Activated CD4-positive, alpha-beta T cell treated with anti-CD3 and anti-CD28 coated beads for 36 hours (primary cell): ENCODE measurements at regions of chr1 and their contacts with region 1.

Region 1: DNA sequence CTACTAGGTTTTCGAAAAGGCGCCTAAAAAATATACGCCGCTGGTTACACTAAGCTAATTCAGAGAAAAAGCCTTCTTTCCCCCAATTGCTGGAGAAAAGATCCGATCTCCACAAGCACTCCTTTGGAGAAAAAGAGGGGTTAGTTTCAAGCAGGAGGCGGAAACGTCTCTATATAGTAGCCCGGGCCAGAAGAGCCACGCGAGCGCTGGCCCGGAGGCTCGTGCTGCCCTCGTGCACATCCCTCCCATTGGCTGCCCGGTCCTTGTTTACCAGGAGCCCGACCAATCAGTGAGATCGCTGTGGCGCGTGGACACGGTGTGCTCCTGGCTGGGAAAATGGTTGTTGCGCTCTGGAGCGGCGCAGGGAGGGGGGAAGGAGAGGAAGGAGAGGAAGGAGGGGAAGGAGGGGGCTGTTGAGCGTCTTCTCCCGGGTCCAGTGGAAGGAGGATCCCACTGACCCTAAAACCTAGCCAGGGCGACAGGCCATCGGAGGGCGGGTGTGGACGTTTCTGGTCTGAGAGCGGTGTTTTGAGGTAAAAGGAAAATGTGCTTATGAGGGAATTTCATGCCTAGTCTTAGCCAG is at the start of gene TXNIP:
- DNase-seq: peak; percentile 97
- ATAC-seq: peak; percentile 82
- H3K4me3 Mint-ChIP-seq: peak within 1 kb of the TSS; percentile 92
- H3K27ac Mint-ChIP-seq: peak within 1 kb of the TSS; percentile 99
- H3K4me1 Mint-ChIP-seq: peaks cover 68% of the 10 kb centered on the region
- H3K27me3 Mint-ChIP-seq: no peaks in the 10 kb centered on the region
- total RNA-seq, gene TXNIP: 112 TPM

Region 2: GRCh38 chr1:145885738-145886287 is 110.7 kb before region 1 on chr1 and contains the start of gene ANKRD35:
- CTCF ChIA-PET with region 1: no interaction called
- POLR2A ChIA-PET with region 1: no interaction called
- intact Hi-C with region 1: loop called in 1 of 2 experiments (anchors 1 kb)
- DNase-seq: peak; percentile 92
- ATAC-seq: peak; percentile 100
- H3K4me3 Mint-ChIP-seq: peak within 1 kb of the TSS; percentile 72
- H3K27ac Mint-ChIP-seq: no peak within 1 kb of the TSS
- H3K4me1 Mint-ChIP-seq: peaks cover 14% of the 10 kb centered on the region
- H3K27me3 Mint-ChIP-seq: peaks cover 17% of the 10 kb centered on the region
- total RNA-seq, gene ANKRD35: 0.30 to 0.55 TPM

Region 3: DNA sequence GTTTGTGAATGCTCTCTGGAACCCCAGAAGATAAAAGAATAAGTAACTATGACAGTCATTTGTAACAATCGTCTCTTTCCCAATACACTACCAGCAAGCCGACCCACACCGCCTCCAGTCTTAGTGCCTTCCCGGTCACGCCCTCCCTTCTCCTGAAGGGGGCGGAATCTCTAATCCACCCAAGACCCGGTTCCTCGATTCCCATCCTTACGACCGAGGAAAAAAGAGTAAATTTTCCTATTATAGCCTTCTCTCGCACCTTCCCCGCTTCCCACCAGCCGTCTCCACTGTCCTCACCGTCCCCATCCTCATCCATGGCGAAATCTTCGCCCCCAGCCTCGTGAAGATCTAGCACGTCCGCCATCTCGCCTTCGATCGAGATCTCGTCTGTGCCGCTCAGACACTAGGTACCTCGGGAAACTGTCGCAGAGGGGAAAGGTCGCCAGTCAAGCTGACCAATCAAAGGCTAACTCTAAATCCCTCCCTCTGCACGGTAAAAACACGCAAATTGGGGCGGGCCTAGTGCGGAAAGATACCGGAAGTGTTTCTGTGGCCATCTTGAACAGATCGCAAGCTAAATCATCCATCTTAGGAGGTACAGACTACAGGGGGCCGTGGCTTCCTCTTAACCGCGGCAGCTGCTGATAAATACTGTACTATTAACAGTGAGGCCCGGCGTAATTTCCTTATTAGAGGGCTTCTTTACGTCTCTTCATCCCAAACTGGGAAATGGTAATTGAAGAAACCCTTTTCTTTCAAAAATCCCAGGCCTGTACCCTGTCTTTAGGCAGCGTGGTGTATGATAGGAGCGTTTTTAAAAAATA is 69.2 kb before region 1 on chr1 and contains the start of gene RBM8A:
- CTCF ChIA-PET with region 1: interaction called, 3 read pairs
- POLR2A ChIA-PET with region 1: interaction called, 10 read pairs
- intact Hi-C with region 1: loop called (anchors 1 to 5 kb)
- DNase-seq: peak; percentile 96
- ATAC-seq: peak; percentile 97
- H3K4me3 Mint-ChIP-seq: no peak within 1 kb of the TSS
- H3K27ac Mint-ChIP-seq: no peak within 1 kb of the TSS
- H3K4me1 Mint-ChIP-seq: peaks cover 28% of the 10 kb centered on the region
- H3K27me3 Mint-ChIP-seq: no peaks in the 10 kb centered on the region
- total RNA-seq, gene RBM8A: 293 to 330 TPM

Region 4: DNA sequence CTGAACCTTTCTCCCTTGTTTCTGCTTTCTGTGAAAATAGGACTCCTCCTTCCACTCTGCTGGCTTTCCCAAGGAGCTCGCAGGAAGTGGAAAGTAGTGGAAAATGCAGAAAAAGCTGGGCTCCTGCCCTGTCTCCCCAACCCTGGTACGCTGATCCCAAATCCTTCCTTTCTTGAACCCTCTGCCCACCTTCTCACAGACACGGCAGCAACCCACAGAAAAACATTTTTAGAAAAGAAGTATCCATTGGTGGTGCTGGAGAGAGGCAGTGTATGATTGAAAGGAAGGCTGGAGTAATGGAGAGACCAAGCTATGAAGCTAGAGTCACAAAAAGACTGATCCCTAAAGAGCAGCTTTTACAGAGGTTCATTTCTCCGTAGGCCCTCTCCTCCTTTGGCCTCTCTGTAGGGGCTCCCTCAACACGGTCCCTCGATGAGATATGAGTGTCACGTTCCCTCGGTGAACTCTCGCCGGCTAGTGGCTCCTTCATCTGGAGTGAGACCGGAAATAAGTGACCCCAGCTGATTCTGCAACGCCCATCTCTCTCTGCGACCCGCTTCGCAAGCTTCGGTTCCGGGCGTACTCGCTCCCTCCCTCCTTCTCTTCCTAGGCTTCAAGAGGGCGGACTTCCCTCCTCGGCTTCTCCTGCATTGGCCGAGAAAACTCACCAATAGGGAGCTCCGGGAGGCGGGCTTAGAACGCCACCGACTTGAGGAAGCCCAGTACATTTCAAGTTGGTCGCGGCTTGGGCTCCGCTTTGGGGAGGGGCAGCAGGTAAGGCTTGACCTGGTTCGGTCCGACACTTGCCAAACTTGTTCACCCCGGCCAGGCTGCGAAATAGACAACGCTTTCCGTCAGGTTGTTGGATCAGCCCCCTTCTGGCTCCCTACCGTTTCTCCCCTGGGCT is 32.3 kb before region 1 on chr1 and contains the starts of genes ANKRD34A and POLR3GL:
- CTCF ChIA-PET with region 1: interaction called, 11 read pairs
- POLR2A ChIA-PET with region 1: interaction called, 8 read pairs
- intact Hi-C with region 1: loop called (anchors 1 kb)
- DNase-seq: peak; percentile 95
- ATAC-seq: peak; percentile 88
- H3K4me3 Mint-ChIP-seq: peak within 1 kb of the TSS; percentile 85
- H3K27ac Mint-ChIP-seq: peak within 1 kb of the TSS; percentile 87
- H3K4me1 Mint-ChIP-seq: peaks cover 33% of the 10 kb centered on the region
- H3K27me3 Mint-ChIP-seq: no peaks in the 10 kb centered on the region
- total RNA-seq, gene ANKRD34A: 5.8 to 6.1 TPM
- total RNA-seq, gene POLR3GL: 19.3 to 22.4 TPM

Region 5: GRCh38 chr1:146007506-146008133 is 11.1 kb after region 1 on chr1:
- CTCF ChIA-PET with region 1: interaction called, 25 read pairs
- POLR2A ChIA-PET with region 1: interaction called, 5 read pairs
- intact Hi-C with region 1: loop called (anchors 1 kb)
- DNase-seq: no peak
- ATAC-seq: no peak
- H3K4me3 Mint-ChIP-seq: peak overlapping the region; percentile 58
- H3K27ac Mint-ChIP-seq: peak overlapping the region; percentile 76
- H3K4me1 Mint-ChIP-seq: peaks cover 38% of the 10 kb centered on the region
- H3K27me3 Mint-ChIP-seq: no peaks in the 10 kb centered on the region

Region 6: DNA sequence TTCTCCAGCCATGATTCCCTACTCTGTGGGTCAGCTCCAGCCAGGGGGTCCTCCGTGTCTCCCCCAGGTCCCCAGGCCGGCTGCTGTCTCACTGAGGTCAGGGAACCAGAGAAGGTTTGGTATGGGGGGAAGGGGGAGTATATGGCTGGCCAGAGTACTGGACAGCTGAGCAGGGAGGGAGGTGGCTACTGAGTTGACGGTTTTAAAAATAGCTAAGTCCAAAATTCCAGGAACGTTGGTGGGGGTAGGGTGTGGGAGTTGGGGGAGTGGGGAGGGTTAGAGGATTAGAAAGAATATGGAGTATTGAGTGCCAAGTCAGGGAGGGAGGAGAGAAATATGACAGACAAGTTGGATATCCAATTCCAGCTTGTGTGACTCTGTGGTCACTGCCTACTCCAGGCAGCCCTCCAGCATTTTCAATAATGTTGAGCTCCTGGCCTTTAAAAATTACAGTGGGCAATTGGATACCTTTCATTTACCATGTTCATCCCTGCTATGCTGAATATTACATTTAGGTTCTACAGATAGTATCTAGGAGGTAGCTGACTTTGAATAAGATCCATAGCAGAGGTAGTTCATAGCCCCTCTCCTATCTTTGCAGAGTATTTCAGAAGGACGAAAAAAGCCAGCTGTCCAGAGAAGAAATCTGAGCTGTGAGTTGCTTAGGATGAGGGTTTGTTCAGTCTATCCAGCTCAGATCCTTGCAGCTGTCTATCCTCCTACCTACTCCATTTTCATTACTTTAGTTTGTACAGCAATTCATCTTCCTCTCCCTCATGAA is 25.3 kb after region 1 on chr1 and contains the start of gene HJV:
- CTCF ChIA-PET with region 1: no interaction called
- POLR2A ChIA-PET with region 1: no interaction called
- intact Hi-C with region 1: no loop called
- DNase-seq: no peak
- ATAC-seq: no peak
- H3K4me3 Mint-ChIP-seq: no peak within 1 kb of the TSS
- H3K27ac Mint-ChIP-seq: no peak within 1 kb of the TSS
- H3K4me1 Mint-ChIP-seq: peaks cover 8% of the 10 kb centered on the region
- H3K27me3 Mint-ChIP-seq: peaks cover 37% of the 10 kb centered on the region
- total RNA-seq, gene HJV: not detected